Psoas muscle (tissue), 8 donors: ENCODE measurements at regions of chr5 and their contacts with region 1.

Region 1: GRCh38 chr5:79636981-79637733 is 24.9 kb downstream of the TENT2 start:
- DNase-seq: no peak
- ATAC-seq: peak in 2 of 4 donors; percentile 43 to 61
- H3K4me3 ChIP-seq: no peak overlapping the region
- H3K27ac ChIP-seq: no peak overlapping the region
- H3K4me1 ChIP-seq: no peaks in the 10 kb centered on the region
- H3K27me3 ChIP-seq: no peaks in the 10 kb centered on the region
- CTCF ChIP-seq: no peak

Region 2: DNA sequence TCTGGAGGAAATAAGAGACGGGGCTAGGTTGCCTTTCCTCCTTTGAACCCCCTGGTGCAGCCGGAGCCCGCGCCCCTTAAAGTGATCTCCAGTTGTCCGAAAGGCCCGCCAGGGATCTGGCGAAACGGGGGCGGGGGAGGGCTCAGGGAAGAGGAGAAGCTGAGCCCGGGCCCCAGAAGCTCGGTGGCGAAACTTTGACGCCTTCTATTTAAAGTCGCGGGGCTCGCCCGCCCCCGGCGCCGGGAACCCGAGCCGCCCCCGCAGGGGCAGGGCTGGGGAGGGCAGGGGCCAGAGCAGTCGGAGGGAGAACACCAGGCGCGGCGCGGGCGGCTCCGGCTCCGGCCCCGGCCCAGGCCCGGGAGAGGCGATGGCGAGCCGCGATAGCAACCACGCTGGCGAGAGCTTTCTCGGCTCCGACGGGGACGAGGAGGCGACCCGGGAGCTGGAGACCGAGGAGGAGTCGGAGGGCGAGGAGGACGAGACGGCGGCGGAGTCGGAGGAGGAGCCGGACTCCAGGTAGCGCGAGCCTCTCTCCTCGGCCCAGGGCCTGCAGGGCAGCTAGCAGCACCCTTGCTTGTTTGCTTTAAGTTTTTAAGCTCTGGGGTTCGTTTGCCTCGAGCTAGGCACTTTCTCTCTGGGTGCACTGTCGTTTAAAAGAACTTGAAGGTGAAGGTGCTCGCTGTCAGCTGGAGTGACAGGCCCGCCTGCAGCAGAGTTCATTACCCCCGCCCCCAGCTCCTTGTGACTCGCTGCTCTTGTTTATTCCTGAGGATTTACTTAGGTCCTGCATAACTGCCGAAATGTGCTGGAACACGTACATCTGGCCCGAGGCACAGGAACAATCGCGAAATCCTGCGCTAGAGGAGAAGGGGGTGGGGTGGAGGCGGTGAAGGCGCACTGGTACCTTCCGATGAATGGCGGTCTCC is 52.6 kb after region 1 on chr5 and contains the start of gene CMYA5:
- intact Hi-C with region 1: loop called in 1 of 2 experiments (anchors 10 kb)
- DNase-seq: peak; percentile 84 to 93
- ATAC-seq: peak; percentile 82 to 87 (median 84)
- H3K4me3 ChIP-seq: peak within 1 kb of the TSS; percentile 82
- H3K27ac ChIP-seq: peak within 1 kb of the TSS; percentile 99
- H3K4me1 ChIP-seq: peaks cover 15% of the 10 kb centered on the region
- H3K27me3 ChIP-seq: no peaks in the 10 kb centered on the region
- CTCF ChIP-seq: no peak
- total RNA-seq, gene CMYA5: 1,174 to 1,472 (median 1,378) TPM